ENCODE measurements at regions of chrX and their contacts with region 1.

Region 1: DNA sequence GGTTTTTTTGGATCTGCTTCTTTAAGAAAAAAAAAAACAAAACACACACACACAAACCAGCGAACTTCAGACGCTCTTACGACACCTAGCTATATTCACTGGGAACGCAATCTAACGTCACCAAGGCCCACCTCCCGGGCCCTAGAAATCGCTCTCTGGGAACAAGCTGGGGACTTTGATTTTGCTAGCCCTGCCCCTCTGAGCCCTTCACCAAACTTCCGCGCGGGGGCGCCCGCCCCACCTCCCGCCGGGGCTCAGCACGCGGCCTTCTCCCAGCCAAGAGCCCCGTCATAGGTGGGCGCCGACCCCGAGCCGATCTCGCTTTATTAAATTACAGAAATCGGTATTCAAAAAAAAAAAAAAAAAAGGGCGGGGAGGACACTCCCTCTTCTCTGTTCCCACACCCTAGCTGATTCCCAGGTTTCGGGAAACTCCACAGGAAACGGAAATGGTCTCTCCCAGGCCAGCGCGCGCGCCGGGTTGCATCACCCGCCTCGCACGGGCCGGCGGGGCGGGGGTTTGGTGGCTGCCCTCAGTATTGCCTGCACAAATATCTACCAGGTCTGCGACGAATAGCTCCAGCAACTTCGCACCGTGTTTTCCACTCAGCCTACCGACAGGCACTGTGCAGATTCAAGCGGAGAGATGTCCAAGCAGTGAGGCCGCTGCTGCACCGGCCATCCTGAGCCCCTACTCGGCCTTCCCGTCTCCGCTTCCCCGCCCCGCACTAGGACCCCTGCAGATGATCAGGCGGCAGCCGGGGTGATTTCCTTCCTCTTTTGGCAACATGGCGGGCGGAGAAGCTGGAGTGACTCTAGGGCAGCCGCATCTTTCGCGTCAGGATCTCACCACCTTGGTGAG is at the start of gene EIF2S3:
- DNase-seq: peak; percentile 70 to 98 (median 88)
- ATAC-seq: peak; percentile 81 to 86
- H3K4me3 Mint-ChIP-seq: no peak within 1 kb of the TSS
- H3K27ac Mint-ChIP-seq: peak within 1 kb of the TSS in 3 of 10 donors; percentile 99 to 100 (median 99)
- H3K4me1 Mint-ChIP-seq: peaks cover 0 to 11% (median 5%) of the 10 kb centered on the region in 4 donors
- H3K27me3 Mint-ChIP-seq: no peaks in the 10 kb centered on the region
- polyA plus RNA-seq, gene EIF2S3: 123 to 148 (median 141) TPM

Region 2: GRCh38 chrX:23782863-23783568 is 271.4 kb before region 1 on chrX and contains the start of gene SAT1:
- POLR2A ChIA-PET with region 1: interaction called, 21 read pairs
- DNase-seq: peak; percentile 83 to 97 (median 92)
- ATAC-seq: peak; percentile 90 to 93
- H3K4me3 Mint-ChIP-seq: peak within 1 kb of the TSS; percentile 90 to 98 (median 95)
- H3K27ac Mint-ChIP-seq: peak within 1 kb of the TSS; percentile 94 to 99 (median 98)
- H3K4me1 Mint-ChIP-seq: peaks cover 13 to 45% (median 29%) of the 10 kb centered on the region in 4 donors
- H3K27me3 Mint-ChIP-seq: no peaks in the 10 kb centered on the region
- polyA plus RNA-seq, gene SAT1: 50.1 to 91.0 (median 83.3) TPM

Region 3: DNA sequence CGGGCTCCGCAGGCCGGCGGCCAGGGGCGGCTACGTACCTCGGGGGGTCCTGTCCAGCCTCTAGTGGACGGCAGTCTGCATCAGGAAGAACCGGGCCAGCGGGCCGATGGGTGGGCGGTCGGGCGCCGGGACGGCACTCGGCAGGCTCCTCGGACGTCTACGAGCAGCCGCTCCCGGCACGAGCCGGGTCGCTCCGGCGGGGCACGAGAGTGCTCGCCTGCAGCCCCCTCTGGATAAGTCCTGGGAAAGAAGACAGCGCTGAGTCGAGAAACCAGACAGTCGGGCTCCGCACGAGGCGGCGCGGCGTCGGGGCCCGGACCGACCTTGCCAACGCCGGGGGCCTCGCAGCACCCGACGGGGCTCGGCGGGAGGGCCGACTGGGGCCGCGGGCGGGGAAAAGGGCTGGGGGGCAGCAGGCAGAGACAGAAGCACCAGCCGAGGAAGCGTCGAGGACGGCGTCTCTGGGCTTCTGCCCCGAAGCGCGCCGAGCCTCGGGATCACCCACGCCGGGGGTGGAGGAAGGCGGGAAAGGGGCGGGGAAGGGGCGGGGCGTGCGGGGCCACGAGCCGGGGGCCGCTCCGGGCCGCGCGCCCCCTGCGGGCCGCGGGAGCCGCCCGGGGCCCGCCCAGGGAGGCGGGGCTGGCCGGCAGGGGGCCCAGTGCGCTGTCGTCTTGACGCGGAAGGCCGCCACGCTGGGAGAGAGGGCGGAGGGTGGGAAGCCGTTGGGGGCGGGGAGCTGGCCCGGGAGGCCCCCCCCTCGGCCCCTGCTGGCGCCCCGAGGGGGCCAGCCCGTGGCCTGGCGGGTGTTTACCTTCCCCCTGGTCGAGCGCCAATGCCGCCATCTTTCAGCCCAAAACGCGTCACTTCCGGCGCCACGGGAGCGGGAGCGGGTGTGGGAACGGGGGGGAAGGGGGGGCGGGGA is 29.3 kb before region 1 on chrX:
- POLR2A ChIA-PET with region 1: interaction called, 65 read pairs
- DNase-seq: peak; percentile 70 to 84 (median 78)
- ATAC-seq: peak; percentile 86 to 88
- H3K4me3 Mint-ChIP-seq: peak overlapping the region; percentile 75 to 94 (median 88)
- H3K27ac Mint-ChIP-seq: peak overlapping the region in 8 of 10 donors; percentile 48 to 91 (median 80)
- H3K4me1 Mint-ChIP-seq: peaks cover 11 to 33% (median 21%) of the 10 kb centered on the region in 4 donors
- H3K27me3 Mint-ChIP-seq: no peaks in the 10 kb centered on the region

Region 4: GRCh38 chrX:24080704-24081103 is 26.3 kb after region 1 on chrX:
- POLR2A ChIA-PET with region 1: no interaction called
- DNase-seq: no peak
- ATAC-seq: no peak
- H3K4me3 Mint-ChIP-seq: peak overlapping the region in 1 of 10 donors; percentile 28
- H3K27ac Mint-ChIP-seq: no peak overlapping the region
- H3K4me1 Mint-ChIP-seq: peaks cover 0 to 4% (median 1%) of the 10 kb centered on the region in 4 donors
- H3K27me3 Mint-ChIP-seq: no peaks in the 10 kb centered on the region

Region 5: DNA sequence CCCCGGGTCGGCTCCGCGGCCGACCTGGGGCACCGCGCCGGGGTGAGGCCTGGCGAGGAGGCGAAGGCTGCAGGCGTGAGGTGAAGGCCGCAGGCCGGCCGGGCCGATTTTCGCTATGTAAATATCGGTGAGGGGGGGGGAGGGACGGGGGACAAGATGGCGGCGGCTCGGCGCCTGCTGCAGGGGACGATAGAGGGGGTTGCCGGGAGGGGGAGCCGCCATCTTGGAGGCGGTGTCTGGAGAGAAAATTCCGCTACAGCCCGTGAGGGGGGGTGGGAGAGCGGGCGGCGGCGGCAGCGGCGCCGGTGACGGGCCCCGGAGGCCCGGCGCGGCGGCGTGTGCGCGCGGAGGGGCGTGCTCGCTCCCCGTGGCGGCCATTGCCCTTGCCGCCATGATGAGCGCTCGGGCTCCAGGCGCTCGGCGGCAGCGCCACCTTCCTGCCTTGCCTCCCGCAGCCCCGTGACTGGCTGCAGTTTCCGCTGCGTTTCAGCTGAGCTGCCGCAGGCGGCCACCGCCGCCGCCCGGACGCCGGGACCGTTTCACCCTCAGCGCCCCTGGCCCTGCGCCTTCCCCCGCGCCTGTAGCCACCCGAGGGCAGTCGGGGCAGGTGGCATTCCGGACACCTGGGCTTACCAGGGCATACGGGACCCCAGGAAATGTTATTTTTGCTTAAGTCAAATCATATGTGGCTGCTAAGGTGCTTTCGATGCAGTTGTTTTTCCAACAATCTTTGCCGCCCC is 95.8 kb after region 1 on chrX:
- POLR2A ChIA-PET with region 1: interaction called, 24 read pairs
- DNase-seq: peak in 9 of 10 donors; percentile 70 to 94 (median 82)
- ATAC-seq: peak; percentile 81 to 83
- H3K4me3 Mint-ChIP-seq: peak overlapping the region; percentile 69 to 94 (median 90)
- H3K27ac Mint-ChIP-seq: peak overlapping the region; percentile 86 to 95 (median 93)
- H3K4me1 Mint-ChIP-seq: peaks cover 21 to 68% (median 50%) of the 10 kb centered on the region in 4 donors
- H3K27me3 Mint-ChIP-seq: no peaks in the 10 kb centered on the region

Region 6: DNA sequence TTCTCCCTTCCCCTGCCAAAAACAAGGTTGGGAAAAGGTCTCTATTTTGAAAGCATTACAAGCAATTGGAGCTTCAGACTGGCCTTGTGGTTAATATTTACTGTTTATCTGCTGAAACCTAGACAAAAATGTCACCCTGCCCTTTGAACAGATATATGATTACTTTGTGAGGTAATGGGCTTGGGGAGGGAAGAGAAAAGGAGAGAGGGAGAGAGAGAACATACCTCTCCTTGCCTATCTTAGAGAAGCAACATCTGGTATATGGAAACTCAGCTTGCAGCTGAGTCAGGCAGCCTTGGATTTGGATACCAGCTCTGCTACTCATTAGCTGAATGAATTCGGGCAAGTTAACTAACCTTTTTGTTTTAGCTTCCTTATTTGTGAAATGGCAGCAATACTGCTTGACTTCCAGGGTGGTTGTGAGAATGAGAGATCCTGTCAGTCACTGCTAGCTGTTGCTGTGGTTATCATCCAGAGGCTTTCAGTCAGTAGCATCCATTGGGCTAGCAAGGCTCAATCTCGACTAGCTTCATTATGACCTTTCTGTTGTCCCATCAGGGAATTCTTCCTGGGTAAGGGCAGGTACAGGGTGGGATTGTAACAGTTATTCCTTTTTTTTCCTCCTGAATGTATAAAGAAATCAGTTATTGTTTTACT is 136.2 kb after region 1 on chrX:
- POLR2A ChIA-PET with region 1: no interaction called
- DNase-seq: no peak
- ATAC-seq: no peak
- H3K4me3 Mint-ChIP-seq: peak overlapping the region in 1 of 10 donors; percentile 5
- H3K27ac Mint-ChIP-seq: peak overlapping the region in 9 of 10 donors; percentile 12 to 71 (median 31)
- H3K4me1 Mint-ChIP-seq: peaks cover 13 to 64% (median 58%) of the 10 kb centered on the region in 4 donors
- H3K27me3 Mint-ChIP-seq: no peaks in the 10 kb centered on the region

Region 7: GRCh38 chrX:24306440-24306839 is 252.0 kb after region 1 on chrX:
- POLR2A ChIA-PET with region 1: no interaction called
- DNase-seq: no peak
- ATAC-seq: no peak
- H3K4me3 Mint-ChIP-seq: no peak overlapping the region
- H3K27ac Mint-ChIP-seq: no peak overlapping the region
- H3K4me1 Mint-ChIP-seq: no peaks in the 10 kb centered on the region
- H3K27me3 Mint-ChIP-seq: no peaks in the 10 kb centered on the region

Measured in naive thymus-derived CD8-positive, alpha-beta T cell (primary cell).